HepG2 (cell line): ENCODE measurements at regions of chr4 and their contacts with region 1.

Region 1: GRCh38 chr4:48774760-48775710 is 5.0 kb downstream of the FRYL start:
- DNase-seq: no peak
- ATAC-seq: no peak
- H3K4me3 ChIP-seq: no peak overlapping the region
- H3K27ac ChIP-seq: no peak overlapping the region
- H3K4me1 ChIP-seq: peaks cover 38% of the 10 kb centered on the region
- H3K27me3 ChIP-seq: no peaks in the 10 kb centered on the region; a peak in 1 of 5 replicates
- CTCF ChIP-seq: no peak
- EP300 ChIP-seq: no peak
- POLR2A ChIP-seq: no peak
- RAD21 ChIP-seq: no peak

Region 2: GRCh38 chr4:48698029-48698971 is 76.7 kb before region 1 on chr4:
- CTCF ChIA-PET with region 1: no interaction called
- POLR2A ChIA-PET with region 1: no interaction called
- in situ Hi-C with region 1: no loop called
- intact Hi-C with region 1: loop called (anchors 5 kb)
- DNase-seq: peak; percentile 75
- ATAC-seq: peak; percentile 51; the same call in 2 of the 3 replicates
- H3K4me3 ChIP-seq: no peak overlapping the region
- H3K27ac ChIP-seq: no peak overlapping the region
- H3K4me1 ChIP-seq: peaks cover 35% of the 10 kb centered on the region
- H3K27me3 ChIP-seq: no peaks in the 10 kb centered on the region
- CTCF ChIP-seq: no peak
- EP300 ChIP-seq: no peak
- POLR2A ChIP-seq: no peak
- RAD21 ChIP-seq: no peak